K562 (cell line): ENCODE measurements at regions of chr3 and their contacts with region 1.

Region 1: GRCh38 chr3:16550676-16551341 is 37.3 kb upstream of the RFTN1 start:
- DNase-seq: peak; percentile 75 to 89 (median 80)
- ATAC-seq: peak; percentile 88
- H3K4me3 ChIP-seq: no peak overlapping the region
- H3K27ac ChIP-seq: peak overlapping the region; percentile 48; the same call in 1 of the 3 replicates
- H3K4me1 ChIP-seq: peaks cover 4 to 16% of the 10 kb centered on the region in 2 experiments; a peak in 4 of 5 replicates
- H3K27me3 ChIP-seq: peaks cover 2 to 8% of the 10 kb centered on the region in 2 experiments; a peak in 2 of 5 replicates
- CTCF ChIP-seq: peak; percentile 89 to 97 (median 93)
- EP300 ChIP-seq: peak; percentile 62
- POLR2A ChIP-seq: no peak
- RAD21 ChIP-seq: peak; percentile 97

Region 2: DNA sequence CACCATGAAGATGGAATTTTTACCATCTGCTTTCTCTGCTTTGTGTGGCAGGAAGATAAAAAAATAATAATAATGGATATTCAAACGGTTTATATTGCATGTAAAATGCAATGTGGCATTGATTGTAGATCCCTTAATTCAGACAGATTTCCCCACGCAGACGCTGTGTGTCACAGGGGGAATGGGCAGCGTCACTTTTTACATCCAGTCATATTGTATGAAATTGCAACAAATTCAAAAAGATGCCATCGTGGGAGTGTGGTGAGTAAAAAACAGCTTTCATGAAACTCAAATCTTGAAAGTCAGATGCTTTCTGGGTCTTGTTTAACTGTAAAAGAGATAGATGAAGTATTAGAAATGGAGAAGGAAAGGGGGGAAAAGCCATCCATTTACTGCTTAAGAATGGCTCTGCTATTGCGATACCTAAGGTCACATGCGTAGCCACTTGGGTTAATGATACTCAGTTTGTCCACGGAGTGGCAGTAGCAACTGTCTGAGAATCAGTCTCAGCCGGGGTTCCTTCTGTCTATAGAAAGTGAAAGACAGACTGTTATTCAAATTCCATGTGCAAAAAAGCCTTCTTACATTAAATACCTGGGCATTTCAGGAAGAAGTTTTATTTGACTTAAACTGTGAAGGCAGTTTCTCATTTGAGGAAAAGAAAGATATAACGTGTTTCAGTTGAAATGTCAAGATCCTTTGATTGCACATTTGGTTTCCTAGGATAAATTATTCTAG is 920.8 kb before region 1 on chr3:
- CTCF ChIA-PET with region 1: interaction called, 3 read pairs
- POLR2A ChIA-PET with region 1: no interaction called
- in situ Hi-C with region 1: loop called (anchors 25 kb)
- intact Hi-C with region 1: loop called (anchors 10 kb)
- DNase-seq: peak; percentile 72 to 86 (median 76)
- ATAC-seq: peak; percentile 99
- H3K4me3 ChIP-seq: no peak overlapping the region
- H3K27ac ChIP-seq: no peak overlapping the region
- H3K4me1 ChIP-seq: peaks cover 3 to 12% of the 10 kb centered on the region in 2 experiments; a peak in 3 of 5 replicates
- H3K27me3 ChIP-seq: no peaks in the 10 kb centered on the region
- CTCF ChIP-seq: peak; percentile 77 to 93 (median 85)
- EP300 ChIP-seq: no peak; the same call in 1 of the 2 replicates
- POLR2A ChIP-seq: no peak
- RAD21 ChIP-seq: peak; percentile 92 to 93

Region 3: DNA sequence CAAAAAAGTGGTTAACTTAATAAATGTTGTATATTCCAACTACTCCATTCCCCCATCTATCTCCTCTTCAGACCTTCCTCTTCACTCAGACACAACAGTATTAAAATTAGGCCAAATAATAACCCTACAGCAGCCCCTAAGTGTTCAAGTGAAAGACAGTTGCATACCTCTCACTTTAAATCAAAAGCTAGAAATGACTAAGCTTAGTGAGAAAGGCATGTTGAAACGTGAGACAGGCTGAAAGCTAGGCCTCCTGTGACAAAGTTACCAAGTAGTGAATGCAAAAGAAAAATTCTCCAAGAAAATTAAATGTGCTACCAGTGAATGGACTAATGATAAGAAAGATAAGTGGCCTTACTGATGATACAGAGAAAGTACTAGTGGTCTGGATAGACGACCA is 824.8 kb before region 1 on chr3:
- CTCF ChIA-PET with region 1: no interaction called
- POLR2A ChIA-PET with region 1: no interaction called
- in situ Hi-C with region 1: no loop called
- intact Hi-C with region 1: no loop called
- DNase-seq: no peak
- ATAC-seq: no peak
- H3K4me3 ChIP-seq: no peak overlapping the region
- H3K27ac ChIP-seq: no peak overlapping the region
- H3K4me1 ChIP-seq: no peaks in the 10 kb centered on the region
- H3K27me3 ChIP-seq: no peaks in the 10 kb centered on the region
- CTCF ChIP-seq: no peak
- EP300 ChIP-seq: no peak
- POLR2A ChIP-seq: no peak
- RAD21 ChIP-seq: no peak

Region 4: DNA sequence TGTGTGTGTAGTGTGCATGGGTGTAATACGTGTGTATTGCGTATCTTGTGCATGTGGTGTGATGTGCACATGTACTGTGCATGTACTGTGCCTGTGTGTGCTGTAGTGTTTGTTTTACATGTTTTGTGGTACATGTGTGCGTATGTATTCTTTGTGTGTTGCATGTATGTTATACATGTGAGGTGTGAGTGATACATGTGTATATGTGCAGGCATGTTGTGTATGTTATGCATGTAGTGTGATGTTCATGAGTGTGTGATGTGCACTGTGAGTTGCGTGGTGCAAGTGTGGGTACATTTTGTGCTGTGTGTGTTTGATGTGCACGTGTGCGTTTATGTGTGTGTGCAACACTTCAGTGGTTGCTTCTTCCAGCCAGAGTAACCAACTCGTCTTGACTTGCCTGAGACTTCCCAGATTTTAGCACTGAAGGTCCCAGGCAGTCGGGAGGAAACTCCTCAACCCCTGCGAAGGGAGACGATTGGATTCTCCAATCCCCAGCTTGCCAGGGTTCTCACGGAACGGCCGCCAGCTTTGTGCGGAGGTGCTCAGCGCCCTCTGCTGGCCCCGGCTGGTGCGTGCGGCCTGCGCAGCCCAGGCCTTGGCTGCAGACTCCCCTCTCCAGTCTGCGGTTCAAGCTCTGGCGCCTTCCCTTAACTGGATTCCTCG is 372.7 kb before region 1 on chr3:
- CTCF ChIA-PET with region 1: no interaction called
- POLR2A ChIA-PET with region 1: no interaction called
- in situ Hi-C with region 1: no loop called
- intact Hi-C with region 1: loop called (anchors 5 kb)
- DNase-seq: peak; percentile 74 to 90 (median 82)
- ATAC-seq: peak; percentile 97
- H3K4me3 ChIP-seq: no peak overlapping the region
- H3K27ac ChIP-seq: no peak overlapping the region
- H3K4me1 ChIP-seq: peaks cover 0 to 5% of the 10 kb centered on the region in 2 experiments; a peak in 1 of 5 replicates
- H3K27me3 ChIP-seq: peaks cover 17 to 55% of the 10 kb centered on the region in 2 experiments
- CTCF ChIP-seq: peak; percentile 94 to 97 (median 96)
- EP300 ChIP-seq: no peak
- POLR2A ChIP-seq: no peak
- RAD21 ChIP-seq: peak; percentile 94

Region 5: DNA sequence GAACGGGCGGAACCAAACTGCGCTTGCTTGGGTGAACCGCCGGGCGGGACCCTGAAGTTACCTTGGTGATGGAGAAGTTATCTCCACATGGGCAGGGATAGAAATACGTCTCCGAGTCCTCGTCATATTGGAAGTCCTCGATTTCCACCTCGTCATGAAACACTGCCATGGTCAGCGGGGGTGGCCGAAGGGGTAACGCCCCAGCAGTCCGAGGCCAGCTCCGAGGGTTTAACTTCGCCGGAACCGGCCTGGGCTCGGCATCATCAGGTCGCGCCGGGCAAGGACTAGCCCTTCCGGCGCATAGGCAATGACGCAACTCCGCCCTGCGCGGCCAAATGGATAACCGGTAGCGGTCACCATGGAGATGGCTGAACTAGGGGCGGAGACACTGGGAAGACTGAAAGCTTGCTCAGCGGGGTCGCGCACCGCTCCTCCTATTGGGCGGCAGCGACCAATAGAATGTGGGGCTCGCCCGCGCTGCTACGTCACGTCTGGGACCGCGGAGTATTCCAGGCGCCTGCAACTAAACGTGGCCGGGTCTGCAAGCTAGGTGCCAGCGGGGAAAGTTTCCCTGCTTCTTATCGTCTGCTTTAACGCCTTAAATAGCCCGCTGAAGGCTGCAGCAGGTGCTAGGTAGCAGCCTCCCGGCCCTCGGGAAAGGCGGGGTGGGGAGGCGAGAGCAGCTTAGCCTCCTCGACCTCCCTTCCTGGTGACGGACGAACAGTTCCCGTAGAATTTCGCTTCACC is 285.9 kb before region 1 on chr3 and contains the starts of genes DPH3 and OXNAD1:
- CTCF ChIA-PET with region 1: interaction called, 20 read pairs
- POLR2A ChIA-PET with region 1: no interaction called
- in situ Hi-C with region 1: no loop called
- intact Hi-C with region 1: loop called (anchors 1 kb)
- DNase-seq: peak; percentile 98 to 100 (median 98)
- ATAC-seq: peak; percentile 98
- H3K4me3 ChIP-seq: peak within 1 kb of the TSS; percentile 79
- H3K27ac ChIP-seq: peak within 1 kb of the TSS; percentile 87
- H3K4me1 ChIP-seq: peaks cover 7 to 10% of the 10 kb centered on the region in 2 experiments; a peak in 4 of 5 replicates
- H3K27me3 ChIP-seq: no peaks in the 10 kb centered on the region
- CTCF ChIP-seq: peak in 1 of 3 experiments; percentile 10; a peak in 1 of 6 replicates
- EP300 ChIP-seq: peak; percentile 53; the same call in 1 of the 2 replicates
- POLR2A ChIP-seq: peak; percentile 96
- RAD21 ChIP-seq: peak in 1 of 2 experiments; percentile 9; a peak in 1 of 4 replicates
- polyA plus RNA-seq, gene DPH3: 131 TPM
- polyA plus RNA-seq, gene OXNAD1: 12.8 to 14.5 TPM

Region 6: DNA sequence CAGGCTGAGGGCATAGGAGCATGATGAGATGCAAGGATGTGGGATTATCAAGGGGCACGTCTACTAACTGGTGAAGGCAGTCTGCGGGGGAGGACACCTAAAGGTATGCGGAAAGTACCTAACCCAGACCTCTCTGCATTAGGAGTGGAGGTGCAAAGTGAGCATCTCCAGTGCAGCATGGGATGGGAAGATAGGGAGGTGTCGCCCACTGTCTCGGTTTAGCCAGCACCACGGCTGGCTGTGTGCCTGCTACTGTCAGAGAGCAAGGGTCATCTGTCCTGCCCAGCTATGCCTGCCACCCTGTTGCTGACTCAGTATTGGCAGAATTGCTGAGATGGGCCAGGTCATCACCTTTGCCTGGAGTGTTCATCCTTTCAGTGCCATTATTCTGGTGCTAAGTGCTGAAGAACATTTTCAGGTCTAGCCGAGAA is 245.7 kb before region 1 on chr3:
- CTCF ChIA-PET with region 1: no interaction called
- POLR2A ChIA-PET with region 1: no interaction called
- in situ Hi-C with region 1: no loop called
- intact Hi-C with region 1: loop called (anchors 1 kb)
- DNase-seq: peak in 2 of 4 experiments; percentile 46 to 51
- ATAC-seq: peak; percentile 32
- H3K4me3 ChIP-seq: no peak overlapping the region
- H3K27ac ChIP-seq: peak overlapping the region; percentile 45; the same call in 2 of the 3 replicates
- H3K4me1 ChIP-seq: peaks cover 11 to 58% of the 10 kb centered on the region in 2 experiments
- H3K27me3 ChIP-seq: no peaks in the 10 kb centered on the region
- CTCF ChIP-seq: no peak
- EP300 ChIP-seq: no peak
- POLR2A ChIP-seq: no peak
- RAD21 ChIP-seq: no peak

Region 7: GRCh38 chr3:17144665-17144993 is 593.8 kb after region 1 on chr3:
- CTCF ChIA-PET with region 1: no interaction called
- POLR2A ChIA-PET with region 1: no interaction called
- in situ Hi-C with region 1: no loop called
- intact Hi-C with region 1: no loop called
- DNase-seq: no peak
- ATAC-seq: no peak; the same call in 2 of the 3 replicates
- H3K4me3 ChIP-seq: no peak overlapping the region
- H3K27ac ChIP-seq: no peak overlapping the region
- H3K4me1 ChIP-seq: no peaks in the 10 kb centered on the region
- H3K27me3 ChIP-seq: peaks cover 33 to 58% of the 10 kb centered on the region in 2 experiments; a peak in 4 of 5 replicates
- CTCF ChIP-seq: no peak
- EP300 ChIP-seq: no peak
- POLR2A ChIP-seq: no peak
- RAD21 ChIP-seq: no peak